ENCODE measurements at regions of chr11 and their contacts with region 1.

Region 1: GRCh38 chr11:131511794-131512193 is 141.4 kb downstream of the NTM start:
- DNase-seq: no peak
- ATAC-seq: no peak

Region 2: GRCh38 chr11:131246663-131247062 is 265.1 kb before region 1 on chr11:
- intact Hi-C with region 1: loop called (anchors 5 kb)
- DNase-seq: peak; percentile 73
- ATAC-seq: peak; percentile 57

Region 3: GRCh38 chr11:131688051-131688698 is 176.4 kb after region 1 on chr11:
- intact Hi-C with region 1: no loop called
- DNase-seq: no peak
- ATAC-seq: peak; percentile 66

Measured in Right ventricle myocardium inferior (tissue), 1 donor.